ENCODE measurements at regions of chr15 and their contacts with region 1.

Region 1: DNA sequence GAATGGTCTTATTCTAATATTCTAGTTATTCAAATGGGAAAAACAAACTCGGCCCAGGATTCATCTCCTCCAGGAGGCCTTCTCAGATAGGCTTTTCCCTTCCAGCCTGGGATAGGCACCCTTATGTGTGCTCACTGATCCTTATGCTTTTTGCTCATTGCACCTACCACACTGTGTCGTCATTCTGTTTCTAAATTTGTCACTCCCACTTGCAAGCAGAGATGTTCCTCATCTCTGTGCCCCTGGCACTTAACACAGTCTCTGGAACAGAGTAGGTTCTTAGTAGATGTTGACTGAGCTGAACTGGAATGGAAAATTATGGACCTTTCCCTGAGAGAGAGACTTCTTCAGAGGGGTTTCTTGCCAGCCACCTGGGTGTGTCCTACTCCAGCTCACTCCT is 18.7 kb upstream of the SPG11 start:
- DNase-seq: no peak
- ATAC-seq: no peak
- H3K4me3 ChIP-seq: peak overlapping the region; percentile 5
- H3K4me3 Mint-ChIP-seq: peak overlapping the region; percentile 64 to 84 (median 74)
- H3K27ac ChIP-seq: peak overlapping the region; percentile 69
- H3K27ac Mint-ChIP-seq: peak overlapping the region; percentile 88 to 99 (median 94)
- H3K4me1 ChIP-seq: peaks cover 65 to 72% of the 10 kb centered on the region in 2 donors
- H3K4me1 Mint-ChIP-seq: peaks cover 56 to 98% (median 86%) of the 10 kb centered on the region in 7 donors
- H3K27me3 ChIP-seq: no peaks in the 10 kb centered on the region
- H3K27me3 Mint-ChIP-seq: no peaks in the 10 kb centered on the region

Region 2: GRCh38 chr15:44670491-44670890 is 11.7 kb before region 1 on chr15:
- CTCF ChIA-PET with region 1: interaction called, 69 read pairs
- POLR2A ChIA-PET with region 1: interaction called, 786 read pairs
- intact Hi-C with region 1: loop called (anchors 1 kb)
- DNase-seq: no peak
- ATAC-seq: no peak
- H3K4me3 ChIP-seq: no peak overlapping the region
- H3K4me3 Mint-ChIP-seq: peak overlapping the region in 9 of 10 donors; percentile 38 to 65 (median 52)
- H3K27ac ChIP-seq: peak overlapping the region; percentile 69
- H3K27ac Mint-ChIP-seq: peak overlapping the region; percentile 68 to 99 (median 94)
- H3K4me1 ChIP-seq: peaks cover 58 to 87% of the 10 kb centered on the region in 2 donors
- H3K4me1 Mint-ChIP-seq: peaks cover 69 to 98% (median 94%) of the 10 kb centered on the region in 7 donors
- H3K27me3 ChIP-seq: no peaks in the 10 kb centered on the region
- H3K27me3 Mint-ChIP-seq: no peaks in the 10 kb centered on the region

Region 3: DNA sequence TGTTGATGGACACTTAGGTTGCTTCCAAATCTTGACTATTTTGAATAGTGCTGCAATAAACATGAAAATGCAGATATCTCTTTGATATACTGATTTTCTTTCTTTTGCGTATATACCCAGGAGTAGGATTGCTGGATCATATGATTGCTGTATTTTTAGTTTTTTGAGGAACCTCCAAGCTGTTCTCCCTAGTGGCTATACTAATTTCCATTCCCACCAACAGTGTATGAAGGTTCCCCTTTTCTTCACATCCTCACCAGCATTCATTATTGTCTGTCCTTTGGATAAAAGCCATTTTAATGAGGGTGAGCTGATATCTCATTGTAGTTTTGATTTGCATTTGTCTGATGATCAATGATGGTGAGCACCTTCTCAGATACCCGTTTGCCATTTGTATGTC is 16.4 kb after region 1 on chr15:
- CTCF ChIA-PET with region 1: interaction called, 3 read pairs
- POLR2A ChIA-PET with region 1: interaction called, 3,822 read pairs
- intact Hi-C with region 1: no loop called
- DNase-seq: no peak
- ATAC-seq: no peak
- H3K4me3 ChIP-seq: no peak overlapping the region
- H3K4me3 Mint-ChIP-seq: no peak overlapping the region
- H3K27ac ChIP-seq: no peak overlapping the region
- H3K27ac Mint-ChIP-seq: peak overlapping the region in 2 of 9 donors; percentile 7 to 65
- H3K4me1 ChIP-seq: no peaks in the 10 kb centered on the region
- H3K4me1 Mint-ChIP-seq: peaks cover 18 to 49% (median 36%) of the 10 kb centered on the region in 7 donors
- H3K27me3 ChIP-seq: no peaks in the 10 kb centered on the region
- H3K27me3 Mint-ChIP-seq: peaks cover 0 to 20% (median 0%) of the 10 kb centered on the region in 5 donors

Region 4: GRCh38 chr15:44728576-44729407 is 46.6 kb after region 1 on chr15:
- CTCF ChIA-PET with region 1: interaction called, 7 read pairs
- POLR2A ChIA-PET with region 1: interaction called, 3,822 read pairs
- intact Hi-C with region 1: loop called (anchors 1 to 2 kb)
- DNase-seq: peak; percentile 75 to 97 (median 96)
- ATAC-seq: peak; percentile 88
- H3K4me3 ChIP-seq: peak overlapping the region; percentile 94
- H3K4me3 Mint-ChIP-seq: peak overlapping the region; percentile 87 to 100 (median 99)
- H3K27ac ChIP-seq: peak overlapping the region; percentile 99
- H3K27ac Mint-ChIP-seq: peak overlapping the region; percentile 98 to 100 (median 100)
- H3K4me1 ChIP-seq: peaks cover 52 to 56% of the 10 kb centered on the region in 2 donors
- H3K4me1 Mint-ChIP-seq: peaks cover 54 to 86% (median 77%) of the 10 kb centered on the region in 7 donors
- H3K27me3 ChIP-seq: no peaks in the 10 kb centered on the region
- H3K27me3 Mint-ChIP-seq: peaks cover 0 to 2% (median 0%) of the 10 kb centered on the region in 5 donors